ENCODE measurements at regions of chr16 and their contacts with region 1.

Region 1: DNA sequence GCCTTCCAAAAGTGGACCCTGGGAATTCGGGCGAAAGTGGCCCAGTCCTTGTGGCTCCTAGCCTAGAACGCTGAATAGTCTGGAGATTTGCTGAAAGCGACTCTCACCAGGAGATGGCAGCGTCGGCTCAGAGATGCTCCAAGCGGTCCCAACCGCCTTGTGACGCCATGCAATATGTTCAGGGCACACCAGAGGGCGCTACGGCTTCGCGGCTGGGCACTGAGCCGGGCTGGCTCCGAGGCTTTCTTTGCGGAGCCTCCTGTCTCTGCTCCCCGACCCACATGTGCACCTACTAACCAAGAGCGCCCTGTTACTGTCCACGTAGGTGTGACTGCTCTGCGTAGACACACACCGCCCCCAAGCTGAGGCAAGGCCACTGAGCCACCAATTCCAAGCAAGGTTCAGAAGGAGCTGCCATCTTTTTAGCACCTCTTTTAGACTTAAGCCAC is 36.9 kb downstream of the SYCE1L start:
- DNase-seq: peak; percentile 81 to 93 (median 83)
- ATAC-seq: peak; percentile 93 to 99 (median 98)
- H3K4me3 ChIP-seq: peak overlapping the region in 1 of 12 donors; percentile 23
- H3K27ac ChIP-seq: no peak overlapping the region
- H3K4me1 ChIP-seq: peaks cover 0 to 2% (median 0%) of the 10 kb centered on the region in 12 donors
- H3K27me3 ChIP-seq: peaks cover 0 to 12% (median 2%) of the 10 kb centered on the region in 9 donors
- CTCF ChIP-seq: peak; percentile 96 to 100 (median 99)
- POLR2A ChIP-seq: no peak

Region 2: DNA sequence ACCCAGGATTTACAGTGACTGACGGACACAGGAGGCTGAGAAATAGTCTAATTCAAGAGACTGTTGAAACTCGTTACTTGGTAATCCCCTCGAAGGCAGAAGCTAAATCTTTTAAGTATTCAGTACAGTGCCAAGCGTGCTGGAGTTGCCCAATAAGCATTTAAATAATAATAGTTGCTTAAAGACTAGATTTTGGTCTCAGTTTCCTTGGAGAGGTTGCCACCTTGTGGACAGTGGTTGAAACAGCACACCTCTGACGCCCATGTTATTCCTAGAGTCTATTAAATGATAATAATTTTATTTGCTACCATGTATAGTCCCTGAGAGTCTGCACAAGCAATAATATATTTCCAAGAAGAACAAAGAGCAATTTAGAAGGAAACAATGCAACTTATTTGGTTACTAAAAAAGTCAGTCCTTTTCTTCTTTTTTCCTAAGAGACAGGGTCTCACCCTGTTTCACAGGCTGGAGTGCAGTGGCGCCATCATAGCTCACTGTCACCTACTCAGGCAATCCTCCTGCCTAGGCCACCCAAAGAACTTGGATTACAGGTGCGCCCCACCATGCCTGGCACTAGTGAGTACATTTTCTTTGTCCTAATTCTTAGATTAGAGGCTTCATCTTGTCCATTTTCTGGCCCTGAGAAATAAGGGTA is 348.2 kb after region 1 on chr16:
- intact Hi-C with region 1: loop called (anchors 1 to 2 kb)
- DNase-seq: peak in 2 of 5 donors; percentile 19 to 36
- ATAC-seq: peak in 2 of 4 donors; percentile 38 to 46
- H3K4me3 ChIP-seq: no peak overlapping the region
- H3K27ac ChIP-seq: peak overlapping the region in 2 of 12 donors; percentile 22 to 41
- H3K4me1 ChIP-seq: peaks cover 0 to 13% (median 0%) of the 10 kb centered on the region in 12 donors
- H3K27me3 ChIP-seq: peaks cover 0 to 11% (median 0%) of the 10 kb centered on the region in 9 donors
- CTCF ChIP-seq: peak; percentile 76 to 95 (median 88)
- POLR2A ChIP-seq: no peak

Region 3: DNA sequence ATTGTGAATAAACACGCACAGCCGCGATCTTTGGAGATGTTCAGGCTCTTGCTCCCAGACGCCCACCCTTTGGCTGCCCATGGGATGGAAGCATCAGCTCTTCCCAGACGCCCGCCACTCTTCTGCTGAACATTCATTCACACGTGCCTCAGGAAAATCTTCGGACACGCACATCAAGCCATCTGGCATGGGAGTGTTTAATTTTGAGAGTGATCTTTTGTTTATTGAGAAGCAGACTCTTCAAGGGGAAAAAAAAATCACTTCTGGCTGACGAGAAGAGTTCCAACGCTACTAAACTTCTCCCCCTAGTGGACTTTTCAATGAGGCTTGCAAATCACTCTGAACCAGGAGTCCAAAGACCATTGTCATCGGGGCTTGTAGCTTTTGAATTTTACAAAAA is 424.2 kb after region 1 on chr16:
- intact Hi-C with region 1: loop called in 9 of 10 experiments (anchors 1 to 5 kb)
- DNase-seq: no peak
- ATAC-seq: peak in 1 of 4 donors; percentile 30
- H3K4me3 ChIP-seq: no peak overlapping the region
- H3K27ac ChIP-seq: no peak overlapping the region
- H3K4me1 ChIP-seq: peaks cover 0 to 2% (median 0%) of the 10 kb centered on the region in 12 donors
- H3K27me3 ChIP-seq: peaks cover 0 to 9% (median 0%) of the 10 kb centered on the region in 9 donors
- CTCF ChIP-seq: peak; percentile 24 to 63 (median 46)
- POLR2A ChIP-seq: no peak

Region 4: DNA sequence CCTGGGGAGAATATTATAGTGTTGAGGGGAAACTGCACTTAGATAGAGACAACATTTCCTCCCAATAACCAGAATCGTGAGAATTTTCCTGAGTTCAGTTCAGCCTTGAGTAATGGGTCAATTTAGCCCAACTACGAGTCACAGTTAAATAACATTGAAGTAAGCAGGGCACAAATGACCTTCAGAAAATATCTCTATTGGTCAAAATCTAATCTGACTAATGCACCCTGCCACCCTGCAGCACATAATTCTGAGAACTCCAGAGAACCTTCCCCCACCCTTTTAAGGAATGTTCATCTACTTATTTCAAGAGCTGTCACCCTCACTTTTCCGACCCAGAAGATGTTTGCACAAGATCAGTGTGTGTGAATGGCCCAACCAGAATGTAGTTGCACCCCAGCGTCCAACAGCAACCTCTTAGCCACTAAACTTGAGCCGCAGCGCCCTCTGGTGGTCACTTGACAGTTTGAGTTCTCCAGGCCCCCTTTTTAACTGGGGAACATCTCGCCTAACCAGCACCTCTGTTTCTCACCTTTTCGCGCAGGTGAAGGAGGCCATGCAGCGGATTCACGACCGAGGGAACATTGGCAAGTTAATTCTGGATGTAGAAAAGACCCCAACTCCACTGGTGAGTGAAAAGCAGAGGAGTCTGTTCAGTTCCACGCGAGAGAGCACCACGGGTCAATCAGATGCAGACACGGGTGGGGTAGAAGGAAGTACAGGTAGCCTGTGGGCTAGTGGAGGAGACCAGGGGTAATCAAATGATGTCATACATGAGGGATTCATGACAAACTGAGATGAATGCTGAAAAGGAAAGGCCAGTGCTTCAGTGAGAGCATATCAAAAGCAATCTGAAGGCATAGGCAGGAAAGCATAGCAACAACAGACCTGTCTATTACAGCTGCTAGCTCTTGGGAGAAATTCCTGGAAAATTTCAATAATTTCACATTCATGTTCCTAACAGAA is 735.5 kb after region 1 on chr16:
- intact Hi-C with region 1: loop called in 5 of 10 experiments (anchors 5 to 10 kb)
- DNase-seq: peak; percentile 71 to 85 (median 81)
- ATAC-seq: peak in 3 of 4 donors; percentile 87 to 93 (median 88)
- H3K4me3 ChIP-seq: no peak overlapping the region
- H3K27ac ChIP-seq: peak overlapping the region in 1 of 12 donors; percentile 29
- H3K4me1 ChIP-seq: peaks cover 0 to 4% (median 0%) of the 10 kb centered on the region in 12 donors
- H3K27me3 ChIP-seq: peaks cover 0 to 5% (median 0%) of the 10 kb centered on the region in 9 donors
- CTCF ChIP-seq: peak; percentile 58 to 83 (median 78)
- POLR2A ChIP-seq: no peak

Region 5: GRCh38 chr16:78002915-78003538 is 766.9 kb after region 1 on chr16:
- intact Hi-C with region 1: loop called in 2 of 10 experiments (anchors 10 kb)
- DNase-seq: peak; percentile 74 to 90 (median 84)
- ATAC-seq: peak; percentile 70 to 98 (median 93)
- H3K4me3 ChIP-seq: no peak overlapping the region
- H3K27ac ChIP-seq: no peak overlapping the region
- H3K4me1 ChIP-seq: peaks cover 0 to 2% (median 0%) of the 10 kb centered on the region in 12 donors
- H3K27me3 ChIP-seq: no peaks in the 10 kb centered on the region
- CTCF ChIP-seq: peak; percentile 68 to 91 (median 83)
- POLR2A ChIP-seq: no peak

Region 6: DNA sequence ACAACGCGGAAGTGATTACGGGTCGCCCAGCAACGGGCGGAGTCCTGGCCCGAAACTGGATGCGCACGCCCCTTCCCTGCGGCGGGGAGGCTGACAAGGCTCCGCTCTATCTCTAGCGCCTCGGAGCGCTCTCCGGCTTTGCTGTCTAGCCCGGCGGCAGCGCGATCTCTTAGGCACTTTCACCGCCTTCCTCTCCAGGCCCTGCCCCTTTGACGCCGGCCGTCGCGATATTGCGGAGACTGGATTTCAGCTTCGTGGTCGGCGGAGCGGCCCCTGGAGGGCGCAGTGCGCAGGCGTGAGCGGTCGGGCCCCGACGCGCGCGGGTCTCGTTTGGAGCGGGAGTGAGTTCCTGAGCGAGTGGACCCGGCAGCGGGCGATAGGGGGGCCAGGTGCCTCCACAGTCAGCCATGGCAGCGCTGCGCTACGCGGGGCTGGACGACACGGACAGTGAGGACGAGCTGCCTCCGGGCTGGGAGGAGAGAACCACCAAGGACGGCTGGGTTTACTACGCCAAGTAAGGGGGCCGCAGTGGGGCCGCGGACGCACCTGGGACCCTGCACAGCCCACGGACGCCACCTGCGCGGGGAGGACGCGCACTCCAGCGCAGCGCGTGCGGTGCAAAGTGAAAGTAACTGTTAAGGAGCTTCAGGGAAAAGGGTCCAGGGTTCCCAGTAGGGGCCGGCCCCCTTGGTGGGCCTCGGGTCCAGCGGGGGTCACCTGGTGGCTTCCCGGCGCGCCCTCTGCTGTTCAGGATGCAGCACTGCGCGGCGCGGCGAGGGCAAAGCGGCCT is 863.5 kb after region 1 on chr16 and contains the start of gene WWOX:
- intact Hi-C with region 1: loop called in 1 of 10 experiments (anchors 10 kb)
- DNase-seq: peak; percentile 95 to 98 (median 97)
- ATAC-seq: peak; percentile 96 to 98 (median 98)
- H3K4me3 ChIP-seq: peak within 1 kb of the TSS; percentile 71 to 100 (median 90)
- H3K27ac ChIP-seq: peak within 1 kb of the TSS; percentile 60 to 94 (median 87)
- H3K4me1 ChIP-seq: peaks cover 0 to 17% (median 8%) of the 10 kb centered on the region in 12 donors
- H3K27me3 ChIP-seq: peaks cover 0 to 5% (median 0%) of the 10 kb centered on the region in 9 donors
- CTCF ChIP-seq: peak; percentile 69 to 90 (median 82)
- POLR2A ChIP-seq: peak in 1 of 2 donors; percentile 81
- total RNA-seq, gene WWOX: 4.3 to 18.3 (median 10.1) TPM